Transverse colon (tissue), 4 donors: ENCODE measurements at regions of chr6 and their contacts with region 1.

Region 1: DNA sequence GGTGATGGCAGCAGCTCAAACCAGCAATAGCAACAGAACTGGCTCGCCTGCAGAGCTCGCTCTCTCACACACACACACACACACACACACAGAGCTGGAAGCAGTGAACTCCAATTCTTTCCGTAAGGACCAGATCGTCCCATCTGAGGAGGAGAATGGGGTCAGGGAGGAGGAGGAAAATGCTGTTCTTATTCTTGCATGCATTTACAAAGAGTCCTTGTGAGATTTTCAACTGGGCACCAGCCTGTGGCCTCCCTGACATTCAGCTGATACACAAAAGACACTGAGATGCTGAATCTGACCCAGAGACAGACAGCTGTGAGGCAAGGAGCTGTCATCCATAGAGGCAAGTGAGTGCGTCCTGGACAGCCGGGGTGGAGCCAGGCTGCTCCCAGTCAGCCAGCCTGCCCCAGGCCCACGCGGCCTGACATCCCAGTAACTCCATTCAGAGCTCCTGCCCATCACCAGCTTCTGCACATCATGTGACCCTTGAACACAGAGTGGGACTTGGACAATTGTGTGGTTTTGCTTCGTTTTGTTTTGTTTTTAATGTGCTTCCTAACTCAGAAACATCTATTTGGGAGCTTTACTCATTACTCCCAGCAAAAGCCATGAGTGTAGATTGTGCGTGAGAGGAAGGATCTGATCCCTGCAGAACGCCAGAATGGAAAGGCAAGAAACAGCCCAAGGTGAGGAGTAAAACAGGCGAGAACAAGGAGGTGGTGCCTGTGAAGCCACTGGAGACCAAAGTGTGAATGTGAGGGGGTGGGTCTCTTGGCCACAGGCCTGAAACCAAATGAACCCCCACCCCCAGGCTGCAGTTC is 2.1 kb downstream of the SERPINB9 start:
- DNase-seq: no peak
- H3K4me3 ChIP-seq: peak overlapping the region in 1 of 4 donors; percentile 60
- H3K27ac ChIP-seq: peak overlapping the region in 3 of 4 donors; percentile 1 to 80 (median 17)
- H3K4me1 ChIP-seq: peaks cover 0 to 21% (median 7%) of the 10 kb centered on the region in 4 donors
- H3K27me3 ChIP-seq: no peaks in the 10 kb centered on the region
- CTCF ChIP-seq: no peak
- EP300 ChIP-seq: no peak
- POLR2A ChIP-seq: no peak

Region 2: DNA sequence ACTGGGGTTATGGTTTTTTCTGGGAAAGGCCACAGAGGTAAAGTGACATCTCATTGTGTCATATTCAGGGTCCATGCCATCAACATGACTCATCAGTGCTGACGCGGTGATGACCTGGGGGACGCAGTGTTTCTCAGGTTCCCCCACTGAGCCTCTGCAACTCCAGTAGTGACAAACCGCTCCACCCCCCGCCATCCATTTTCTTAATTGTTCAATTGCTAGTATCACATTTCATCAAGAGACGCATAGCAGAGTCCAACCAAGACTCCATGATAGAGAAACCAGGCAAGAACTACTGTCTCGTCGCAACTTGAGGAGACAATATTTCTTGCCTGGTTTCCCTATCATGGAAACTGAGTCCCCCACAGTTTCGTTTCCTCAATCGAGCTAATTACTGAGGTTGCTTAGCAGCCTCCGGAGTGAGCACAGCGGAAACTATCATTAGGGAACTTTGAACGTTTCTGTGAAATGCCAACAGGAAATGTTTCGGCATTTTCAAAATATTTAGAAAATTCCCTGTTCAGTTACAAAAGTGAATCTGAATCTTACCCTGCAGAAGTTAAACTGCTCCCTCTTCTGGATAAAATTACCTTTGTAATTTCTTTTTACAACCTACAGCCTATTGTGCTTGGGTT is 47.2 kb before region 1 on chr6:
- in situ Hi-C with region 1: loop called in 1 of 4 experiments (anchors 10 kb)
- intact Hi-C with region 1: no loop called
- DNase-seq: peak; percentile 54
- H3K4me3 ChIP-seq: peak overlapping the region in 3 of 4 donors; percentile 21 to 46 (median 31)
- H3K27ac ChIP-seq: peak overlapping the region; percentile 49 to 63 (median 56)
- H3K4me1 ChIP-seq: peaks cover 16 to 29% (median 22%) of the 10 kb centered on the region in 4 donors
- H3K27me3 ChIP-seq: no peaks in the 10 kb centered on the region
- CTCF ChIP-seq: peak; percentile 24 to 52 (median 35)
- EP300 ChIP-seq: no peak
- POLR2A ChIP-seq: no peak

Region 3: DNA sequence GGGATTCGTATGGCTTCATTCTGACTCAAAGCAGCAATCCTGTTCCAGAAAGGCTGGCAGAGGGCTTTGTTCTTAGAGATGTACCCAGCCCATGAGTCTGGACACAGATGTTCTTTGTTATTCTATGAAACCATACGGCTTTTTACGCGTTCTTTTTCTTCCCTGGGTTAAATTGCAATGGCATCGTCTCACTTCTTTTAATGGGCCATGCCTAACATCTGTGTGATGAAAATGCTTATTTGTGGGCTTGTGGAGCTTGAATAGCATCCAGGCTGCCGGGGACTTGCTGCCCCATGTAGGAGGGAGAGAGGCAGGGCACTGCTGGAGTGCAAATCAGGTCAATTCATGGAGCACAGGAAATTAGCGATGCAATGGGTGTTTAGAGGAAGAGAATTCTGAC is 967.5 kb after region 1 on chr6:
- in situ Hi-C with region 1: no loop called
- intact Hi-C with region 1: no loop called
- DNase-seq: no peak
- H3K4me3 ChIP-seq: no peak overlapping the region
- H3K27ac ChIP-seq: no peak overlapping the region
- H3K4me1 ChIP-seq: peaks cover 0 to 14% (median 8%) of the 10 kb centered on the region in 4 donors
- H3K27me3 ChIP-seq: no peaks in the 10 kb centered on the region
- CTCF ChIP-seq: no peak
- EP300 ChIP-seq: no peak
- POLR2A ChIP-seq: no peak